IMR-90 (cell line): ENCODE measurements at regions of chr1 and their contacts with region 1.

Region 1: GRCh38 chr1:58783993-58784757 is at the start of gene JUN:
- DNase-seq: peak; percentile 100
- ATAC-seq: peak; percentile 83
- H3K4me3 ChIP-seq: peak within 1 kb of the TSS; percentile 98
- H3K27ac ChIP-seq: peak within 1 kb of the TSS; percentile 91
- H3K4me1 ChIP-seq: peaks cover 8% of the 10 kb centered on the region
- H3K27me3 ChIP-seq: no peaks in the 10 kb centered on the region
- CTCF ChIP-seq: no peak
- POLR2A ChIP-seq: 0 out of 2 replicates have a peak, but pooled peaks have one; percentile 100
- RAD21 ChIP-seq: no peak; the same call in 1 of the 2 replicates
- total RNA-seq, gene JUN: 46.6 and 51.1 TPM in 2 replicates

Region 2: GRCh38 chr1:58104960-58105359 is 679.2 kb before region 1 on chr1:
- CTCF ChIA-PET with region 1: no interaction called
- POLR2A ChIA-PET with region 1: no interaction called
- dilution Hi-C with region 1: no loop called
- in situ Hi-C with region 1: no loop called
- intact Hi-C with region 1: no loop called
- DNase-seq: no peak
- ATAC-seq: no peak
- H3K4me3 ChIP-seq: no peak overlapping the region
- H3K27ac ChIP-seq: no peak overlapping the region
- H3K4me1 ChIP-seq: no peaks in the 10 kb centered on the region
- H3K27me3 ChIP-seq: no peaks in the 10 kb centered on the region
- CTCF ChIP-seq: no peak
- POLR2A ChIP-seq: no peak
- RAD21 ChIP-seq: no peak

Region 3: DNA sequence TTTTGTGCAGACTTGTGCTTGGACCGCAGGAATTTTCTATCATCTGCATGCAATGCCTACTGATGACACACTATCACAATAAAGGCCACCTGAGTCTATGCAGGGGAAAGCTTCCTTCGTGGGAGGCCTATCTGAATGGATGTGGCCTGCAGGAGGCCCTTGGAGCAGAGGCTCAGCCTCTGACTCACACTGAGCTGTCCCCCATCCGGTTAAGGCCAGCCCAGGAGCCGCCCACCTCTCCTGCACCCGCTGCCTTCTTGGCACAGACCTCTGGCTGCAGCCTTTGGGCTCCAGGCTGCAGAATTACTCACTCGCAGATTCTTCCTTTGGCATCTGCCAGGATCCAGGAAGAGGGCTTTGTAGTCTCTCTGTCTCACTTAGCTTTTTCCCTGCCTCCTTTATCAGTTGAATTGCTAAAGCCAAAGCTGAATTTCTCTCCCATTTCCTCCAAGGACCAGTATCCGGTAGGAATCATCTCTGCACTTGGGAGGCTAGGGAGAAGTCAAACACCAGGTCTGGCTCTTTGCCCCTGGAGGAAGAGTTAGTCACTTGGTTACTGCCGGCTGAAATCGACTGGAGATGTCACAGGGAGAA is 64.7 kb after region 1 on chr1:
- CTCF ChIA-PET with region 1: no interaction called
- POLR2A ChIA-PET with region 1: no interaction called
- dilution Hi-C with region 1: no loop called
- in situ Hi-C with region 1: no loop called
- intact Hi-C with region 1: loop called (anchors 2 kb)
- DNase-seq: peak; percentile 98
- ATAC-seq: peak; percentile 97
- H3K4me3 ChIP-seq: no peak overlapping the region; the same call in 1 of the 2 replicates
- H3K27ac ChIP-seq: peak overlapping the region; percentile 46
- H3K4me1 ChIP-seq: peaks cover 9% of the 10 kb centered on the region
- H3K27me3 ChIP-seq: no peaks in the 10 kb centered on the region
- CTCF ChIP-seq: 0 out of 2 replicates have a peak, but pooled peaks have one; percentile 16
- POLR2A ChIP-seq: peak; percentile 36; the same call in 1 of the 2 replicates
- RAD21 ChIP-seq: peak; percentile 23; the same call in 1 of the 2 replicates

Region 4: GRCh38 chr1:59143133-59143487 is 358.9 kb after region 1 on chr1:
- CTCF ChIA-PET with region 1: no interaction called
- POLR2A ChIA-PET with region 1: no interaction called
- dilution Hi-C with region 1: no loop called
- in situ Hi-C with region 1: no loop called
- intact Hi-C with region 1: loop called (anchors 2 kb)
- DNase-seq: peak; percentile 98
- ATAC-seq: peak; percentile 83
- H3K4me3 ChIP-seq: no peak overlapping the region
- H3K27ac ChIP-seq: peak overlapping the region; percentile 47
- H3K4me1 ChIP-seq: peaks cover 17% of the 10 kb centered on the region
- H3K27me3 ChIP-seq: no peaks in the 10 kb centered on the region
- CTCF ChIP-seq: no peak
- POLR2A ChIP-seq: no peak
- RAD21 ChIP-seq: peak; percentile 24; the same call in 1 of the 2 replicates

Region 5: GRCh38 chr1:59432531-59433439 is 648.6 kb after region 1 on chr1:
- CTCF ChIA-PET with region 1: no interaction called
- POLR2A ChIA-PET with region 1: no interaction called
- dilution Hi-C with region 1: no loop called
- in situ Hi-C with region 1: no loop called
- intact Hi-C with region 1: loop called (anchors 10 kb)
- DNase-seq: no peak
- ATAC-seq: no peak
- H3K4me3 ChIP-seq: no peak overlapping the region
- H3K27ac ChIP-seq: no peak overlapping the region
- H3K4me1 ChIP-seq: peaks cover 7% of the 10 kb centered on the region
- H3K27me3 ChIP-seq: no peaks in the 10 kb centered on the region
- CTCF ChIP-seq: no peak
- POLR2A ChIP-seq: no peak
- RAD21 ChIP-seq: no peak

Region 6: GRCh38 chr1:59699227-59699847 is 915.2 kb after region 1 on chr1:
- CTCF ChIA-PET with region 1: interaction called, 4 read pairs
- POLR2A ChIA-PET with region 1: interaction called, 4 read pairs
- dilution Hi-C with region 1: no loop called
- in situ Hi-C with region 1: loop called (anchors 10 kb)
- intact Hi-C with region 1: loop called (anchors 1 kb)
- DNase-seq: peak; percentile 57
- ATAC-seq: 0 out of 2 replicates have a peak, but pooled peaks have one; percentile 19
- H3K4me3 ChIP-seq: no peak overlapping the region
- H3K27ac ChIP-seq: no peak overlapping the region
- H3K4me1 ChIP-seq: peaks cover 21% of the 10 kb centered on the region
- H3K27me3 ChIP-seq: no peaks in the 10 kb centered on the region
- CTCF ChIP-seq: peak; percentile 91
- POLR2A ChIP-seq: 0 out of 2 replicates have a peak, but pooled peaks have one; percentile 35
- RAD21 ChIP-seq: peak; percentile 97

Region 7: DNA sequence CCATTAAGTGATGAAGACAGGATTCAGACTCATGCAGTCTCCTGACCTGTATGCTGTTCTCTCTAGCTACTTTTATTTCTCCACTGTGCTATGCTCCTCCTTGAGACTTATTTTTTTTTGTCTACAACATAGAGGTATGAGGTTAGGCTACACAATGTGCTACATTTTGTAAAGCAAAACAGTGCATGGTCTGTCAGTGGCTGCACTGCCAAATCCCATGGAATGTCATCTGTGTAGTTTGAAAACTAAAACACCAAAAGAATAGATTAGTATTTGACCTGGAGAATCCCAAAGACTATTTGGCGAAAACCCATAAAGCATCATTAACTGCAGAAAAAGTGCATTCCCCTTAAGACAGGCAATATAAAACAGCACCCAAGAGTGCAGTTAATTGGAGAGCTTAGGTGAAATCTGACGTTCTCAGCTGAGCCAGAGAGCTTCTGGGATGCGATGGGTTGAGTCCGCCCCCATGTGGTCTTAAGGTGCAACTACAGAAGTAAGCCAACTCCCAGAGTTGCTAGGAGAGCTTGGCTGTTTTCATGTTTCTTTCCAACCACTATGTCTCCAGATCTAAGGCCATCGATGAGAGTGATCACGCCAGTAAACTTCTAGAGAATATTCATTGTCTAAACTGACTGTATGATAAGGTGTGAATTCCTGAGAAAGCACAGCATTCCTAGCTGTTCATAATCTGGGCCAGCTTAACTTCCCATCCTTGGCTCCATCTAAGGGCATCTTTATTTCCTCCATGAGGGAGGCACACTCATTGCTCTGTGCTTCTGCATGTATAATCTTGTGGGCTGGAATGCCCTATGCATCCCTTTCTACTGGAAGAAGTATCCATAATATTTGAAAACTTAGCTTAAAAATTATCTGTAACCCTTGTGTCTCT is 1163.1 kb after region 1 on chr1:
- CTCF ChIA-PET with region 1: no interaction called
- POLR2A ChIA-PET with region 1: no interaction called
- dilution Hi-C with region 1: no loop called
- in situ Hi-C with region 1: no loop called
- intact Hi-C with region 1: loop called (anchors 5 kb)
- DNase-seq: peak; percentile 63
- ATAC-seq: peak; percentile 99
- H3K4me3 ChIP-seq: no peak overlapping the region
- H3K27ac ChIP-seq: no peak overlapping the region
- H3K4me1 ChIP-seq: no peaks in the 10 kb centered on the region
- H3K27me3 ChIP-seq: no peaks in the 10 kb centered on the region; the same call in 1 of the 2 replicates
- CTCF ChIP-seq: peak; percentile 83
- POLR2A ChIP-seq: no peak
- RAD21 ChIP-seq: peak; percentile 81